Cardiac septum (tissue), 1 donor: ENCODE measurements at regions of chr2 and their contacts with region 1.

Region 1: GRCh38 chr2:70871398-70872211 is 36.0 kb upstream of the CD207 start:
- DNase-seq: peak; percentile 91

Region 2: GRCh38 chr2:70664525-70664924 is 207.1 kb before region 1 on chr2:
- intact Hi-C with region 1: no loop called
- DNase-seq: no peak

Region 3: DNA sequence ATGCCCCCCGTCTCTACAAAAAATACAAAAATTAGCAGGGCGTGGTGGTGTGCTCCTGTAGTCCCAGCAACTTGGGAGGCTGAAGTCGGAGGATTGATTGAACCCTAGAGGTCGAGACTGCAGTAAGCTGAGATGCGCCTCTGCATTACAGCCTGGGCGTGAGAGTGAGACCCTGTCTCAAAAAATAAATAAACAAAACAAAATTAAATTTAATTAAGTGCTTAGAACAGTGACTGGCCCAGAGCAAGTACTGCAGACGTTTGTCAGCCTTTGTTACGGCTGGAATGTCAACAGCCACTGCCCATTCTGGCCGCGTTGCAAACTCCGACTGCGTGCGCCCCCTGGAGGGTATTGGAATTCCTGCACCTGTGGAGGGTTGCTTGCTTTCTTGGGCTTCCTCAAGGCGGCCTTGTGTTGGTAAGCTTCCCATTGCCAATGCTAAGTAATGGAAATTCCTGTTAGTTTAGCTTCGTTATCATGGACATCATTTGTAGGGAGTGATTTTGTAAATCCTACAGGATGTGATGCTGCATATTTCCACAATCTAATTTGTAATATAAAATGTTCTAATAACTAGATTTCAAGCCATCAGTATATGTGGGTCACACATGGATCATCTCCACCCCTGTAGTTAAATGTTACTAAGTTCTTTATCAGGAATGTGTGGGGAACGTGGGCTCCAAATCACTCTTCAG is 48.2 kb after region 1 on chr2:
- intact Hi-C with region 1: loop called (anchors 1 kb)
- DNase-seq: peak; percentile 84

Region 4: DNA sequence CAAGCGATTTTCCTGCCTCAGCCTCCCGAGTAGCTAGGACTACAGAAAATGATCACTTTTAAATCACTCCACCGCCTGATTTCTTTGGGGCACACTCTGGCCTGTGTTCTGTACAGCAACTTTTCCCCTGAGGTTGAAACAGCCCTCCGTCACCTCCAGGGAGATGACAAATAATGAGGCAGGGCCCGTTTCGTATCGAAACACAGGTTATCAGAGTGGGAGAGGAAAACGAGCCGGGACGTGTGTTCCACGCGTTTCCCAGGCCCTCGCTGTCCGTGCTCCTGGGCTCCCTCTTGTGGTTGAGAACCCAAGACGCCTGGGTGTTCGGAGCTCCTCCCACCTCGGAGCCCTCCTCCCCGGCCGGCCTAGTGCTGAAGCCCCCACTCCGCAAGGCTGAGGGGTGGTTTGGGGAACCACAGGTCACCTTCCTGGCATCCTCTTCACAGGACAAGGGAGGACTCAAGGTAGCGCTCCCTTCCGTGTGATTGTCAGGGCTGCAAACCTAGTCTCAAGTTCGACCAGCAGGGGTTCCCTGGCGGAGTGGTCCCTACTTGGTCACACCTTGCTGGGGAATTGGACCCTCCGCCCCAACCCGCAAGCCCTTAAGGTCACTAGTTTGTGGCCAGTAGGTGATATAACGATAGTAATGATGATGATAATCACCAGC is 76.9 kb after region 1 on chr2:
- intact Hi-C with region 1: loop called (anchors 2 kb)
- DNase-seq: peak; percentile 85

Region 5: DNA sequence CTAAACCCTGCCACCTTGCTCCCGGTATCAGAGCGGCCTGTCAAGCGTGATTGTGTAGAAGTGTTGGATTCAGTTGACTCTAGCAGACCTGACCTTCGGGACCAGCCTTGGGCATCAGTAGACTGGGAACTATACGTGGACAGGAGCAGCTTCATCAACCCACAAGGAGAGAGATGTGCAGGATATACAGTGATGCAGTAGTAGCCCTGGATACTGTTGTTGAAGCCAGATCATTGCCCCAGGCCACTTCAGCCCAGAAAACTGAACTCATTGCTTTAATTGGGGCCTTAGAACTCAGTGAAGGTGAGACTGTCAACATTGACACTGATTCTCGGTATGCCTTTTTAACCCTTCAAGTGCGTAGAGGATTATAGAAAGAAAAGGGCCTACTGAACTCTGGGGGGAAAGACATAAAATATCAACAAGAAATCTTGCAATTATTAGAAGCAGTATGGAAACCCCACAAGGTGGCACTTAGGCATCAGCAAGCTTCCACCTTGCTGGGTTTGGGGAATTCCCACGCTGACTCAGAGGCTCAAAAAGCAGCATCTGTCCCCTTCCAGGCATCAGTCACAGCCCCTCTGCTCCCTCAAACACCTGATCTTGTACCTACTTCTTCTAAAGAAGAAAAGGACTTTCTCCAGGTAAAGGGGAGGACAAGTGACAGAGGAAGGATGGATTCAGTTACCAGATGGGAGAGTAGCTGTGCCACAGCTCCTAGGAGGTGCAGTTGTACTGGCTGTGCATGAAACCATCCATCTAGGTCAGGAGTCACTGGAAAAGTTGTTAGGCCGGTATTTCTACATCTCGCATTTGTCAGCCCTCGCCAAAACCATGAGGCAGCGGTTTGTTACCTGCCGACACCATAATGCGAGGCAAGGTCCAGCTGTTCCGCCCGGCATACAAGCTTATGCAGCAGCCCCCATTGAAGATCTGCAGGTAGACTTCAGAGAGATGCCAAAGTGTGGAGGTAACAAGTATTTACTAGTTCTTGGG is 178.1 kb after region 1 on chr2:
- intact Hi-C with region 1: no loop called
- DNase-seq: no peak

Region 6: GRCh38 chr2:71331581-71332434 is 460.2 kb after region 1 on chr2 and contains the start of gene ZNF638:
- intact Hi-C with region 1: no loop called
- DNase-seq: peak; percentile 96
- total RNA-seq, gene ZNF638: 79.5 TPM